GM10248 (cell line): ENCODE measurements at regions of chr10 and their contacts with region 1.

Region 1: DNA sequence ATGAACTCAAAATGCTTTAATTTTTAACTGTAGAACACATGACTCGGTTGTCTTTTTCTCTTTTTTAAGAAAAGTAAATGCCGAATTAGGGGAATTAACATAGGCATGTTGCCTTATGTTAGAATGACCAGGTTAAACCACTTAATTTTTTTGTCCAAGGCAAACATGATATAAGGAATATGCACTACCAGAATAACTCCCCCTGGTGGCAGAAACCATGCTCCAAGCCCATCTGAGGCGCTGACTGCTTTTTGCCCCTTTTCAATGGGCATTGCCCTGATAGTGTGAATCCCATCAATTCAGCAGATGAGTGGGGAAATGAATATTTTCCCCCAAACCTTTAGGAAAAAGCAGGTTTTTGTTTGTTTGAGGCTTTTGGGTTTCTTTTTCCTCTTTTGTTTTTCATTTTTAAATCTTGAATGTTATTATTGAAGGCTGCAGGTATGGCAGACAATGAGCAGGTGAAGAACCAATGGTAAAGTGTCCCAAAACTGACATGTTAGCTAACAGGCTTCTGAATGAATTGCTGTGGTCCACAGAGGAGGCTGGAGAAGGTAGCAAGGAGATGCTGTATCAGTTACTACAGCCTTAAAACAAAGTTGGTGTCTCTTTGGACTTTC is 284.3 kb downstream of the SORCS3 start:
- DNase-seq: peak; percentile 20
- CTCF ChIP-seq: peak; percentile 68

Region 2: GRCh38 chr10:103736763-103737162 is 1188.6 kb before region 1 on chr10:
- CTCF ChIA-PET with region 1: no interaction called
- POLR2A ChIA-PET with region 1: no interaction called
- DNase-seq: no peak
- CTCF ChIP-seq: no peak

Region 3: GRCh38 chr10:104376784-104377300 is 548.5 kb before region 1 on chr10:
- CTCF ChIA-PET with region 1: no interaction called
- POLR2A ChIA-PET with region 1: no interaction called
- DNase-seq: no peak
- CTCF ChIP-seq: no peak

Region 4: GRCh38 chr10:104893701-104894100 is 31.6 kb before region 1 on chr10:
- CTCF ChIA-PET with region 1: no interaction called
- POLR2A ChIA-PET with region 1: no interaction called
- DNase-seq: no peak
- CTCF ChIP-seq: no peak

Region 5: GRCh38 chr10:104913390-104913789 is 12.0 kb before region 1 on chr10:
- CTCF ChIA-PET with region 1: interaction called, 20 read pairs
- POLR2A ChIA-PET with region 1: no interaction called
- DNase-seq: no peak
- CTCF ChIP-seq: no peak

Region 6: DNA sequence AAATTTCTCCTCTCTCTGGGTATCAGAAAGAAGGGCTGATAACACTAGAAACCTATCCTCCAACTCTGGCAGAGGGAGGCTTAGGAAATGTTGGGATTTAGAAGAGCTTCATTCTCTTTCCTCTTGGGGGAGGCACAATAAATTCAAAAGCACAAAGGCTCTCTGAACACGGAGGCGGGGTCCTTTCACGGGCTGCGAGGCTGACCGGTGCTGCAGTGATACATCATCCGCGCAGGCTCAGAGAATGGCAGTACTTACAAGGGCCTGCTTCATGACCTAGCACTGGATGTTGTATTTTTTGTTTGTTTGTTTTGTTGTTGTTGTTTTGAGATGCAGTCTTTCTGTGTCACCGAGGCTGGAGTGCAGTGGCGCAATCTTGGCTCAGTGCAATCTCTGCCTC is 22.0 kb after region 1 on chr10:
- CTCF ChIA-PET with region 1: no interaction called
- POLR2A ChIA-PET with region 1: no interaction called
- DNase-seq: no peak
- CTCF ChIP-seq: no peak